GM18951 (cell line): ENCODE measurements at regions of chr11 and their contacts with region 1.

Region 1: GRCh38 chr11:1896923-1897322 is 5.2 kb upstream of the PRR33 start:
- POLR2A ChIP-seq: no peak

Region 2: DNA sequence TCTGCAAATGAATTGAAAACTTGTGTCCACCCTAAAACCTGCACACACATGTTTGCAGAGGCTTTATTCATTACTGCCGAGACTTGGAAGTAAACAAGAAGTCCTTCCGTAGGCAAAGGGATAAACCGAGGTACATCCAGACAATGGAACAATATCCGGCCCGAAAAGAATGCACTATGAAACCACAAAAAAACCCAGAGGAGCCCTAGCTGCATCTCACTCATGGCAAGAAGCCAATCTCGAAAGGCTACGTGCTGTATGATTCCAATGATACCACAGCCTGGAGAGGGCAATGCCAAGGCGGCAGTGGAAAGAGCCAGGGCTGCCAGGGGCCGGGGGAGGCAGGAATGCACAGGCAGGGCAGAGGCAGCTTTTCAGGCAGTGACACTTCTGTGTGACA is 47.1 kb after region 1 on chr11:
- in situ Hi-C with region 1: loop called (anchors 5 kb)
- POLR2A ChIP-seq: no peak

Region 3: DNA sequence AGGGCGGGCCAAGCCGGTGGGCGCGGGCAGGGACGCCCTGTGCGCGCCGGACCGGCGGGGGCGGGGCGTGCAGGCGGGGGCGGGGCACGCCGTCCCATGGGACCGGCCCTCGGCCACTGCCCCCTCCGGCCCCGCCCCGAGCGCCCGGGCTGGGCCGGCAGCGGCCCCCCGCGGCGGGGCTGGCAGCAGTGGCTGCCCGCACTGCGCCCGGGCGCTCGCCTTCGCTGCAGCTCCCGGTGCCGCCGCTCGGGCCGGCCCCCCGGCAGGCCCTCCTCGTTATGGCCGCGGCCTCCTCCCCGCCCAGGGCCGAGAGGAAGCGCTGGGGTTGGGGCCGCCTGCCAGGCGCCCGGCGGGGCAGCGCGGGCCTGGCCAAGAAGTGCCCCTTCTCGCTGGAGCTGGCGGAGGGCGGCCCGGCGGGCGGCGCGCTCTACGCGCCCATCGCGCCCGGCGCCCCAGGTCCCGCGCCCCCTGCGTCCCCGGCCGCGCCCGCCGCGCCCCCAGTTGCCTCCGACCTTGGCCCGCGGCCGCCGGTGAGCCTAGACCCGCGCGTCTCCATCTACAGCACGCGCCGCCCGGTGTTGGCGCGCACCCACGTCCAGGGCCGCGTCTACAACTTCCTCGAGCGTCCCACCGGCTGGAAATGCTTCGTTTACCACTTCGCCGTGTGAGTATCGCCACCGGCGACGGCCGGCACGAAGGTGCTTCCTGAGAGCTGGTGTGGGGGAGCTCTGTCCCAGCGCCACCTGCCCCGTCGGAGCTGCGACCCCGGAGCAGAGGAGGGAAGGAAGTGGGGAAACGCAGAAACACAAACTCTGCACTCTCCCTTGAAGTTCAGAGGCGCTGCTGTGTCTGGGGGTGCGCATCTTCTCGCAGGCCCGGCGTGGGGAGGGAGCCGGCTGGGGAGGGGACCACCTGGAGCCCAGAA is 548.2 kb after region 1 on chr11 and contains the start of gene KCNQ1:
- in situ Hi-C with region 1: no loop called
- POLR2A ChIP-seq: no peak